Activated CD4-positive, alpha-beta memory T cell treated with anti-CD3 and anti-CD28 coated beads for 36 hours (primary cell): ENCODE measurements at regions of chr11 and their contacts with region 1.

Region 1: GRCh38 chr11:114180301-114181055 is 115.7 kb upstream of the NNMT start:
- DNase-seq: peak; percentile 33
- H3K4me3 Mint-ChIP-seq: no peak overlapping the region
- H3K27ac Mint-ChIP-seq: no peak overlapping the region
- H3K4me1 Mint-ChIP-seq: peaks cover 59% of the 10 kb centered on the region
- H3K27me3 Mint-ChIP-seq: no peaks in the 10 kb centered on the region

Region 2: DNA sequence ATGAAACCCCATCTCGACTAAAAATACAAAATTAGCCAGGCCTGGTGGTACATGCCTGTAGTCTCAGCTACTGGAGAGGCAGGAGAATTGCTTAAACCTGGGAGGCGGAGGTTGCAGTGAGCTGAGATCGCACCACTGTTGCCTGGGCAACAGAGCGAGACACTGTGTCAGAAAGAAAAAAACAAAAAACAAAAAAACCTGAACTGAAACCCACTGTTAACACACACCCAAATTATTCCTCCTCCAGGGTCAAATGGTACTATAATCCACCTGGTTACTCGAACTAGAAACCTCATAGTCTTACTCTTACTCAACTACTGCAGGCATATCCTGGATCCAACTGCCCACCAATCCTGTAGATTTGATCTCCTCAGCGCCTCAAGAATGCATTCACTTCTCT is 340.6 kb before region 1 on chr11:
- CTCF ChIA-PET with region 1: no interaction called
- POLR2A ChIA-PET with region 1: no interaction called
- intact Hi-C with region 1: no loop called
- DNase-seq: no peak
- H3K4me3 Mint-ChIP-seq: no peak overlapping the region
- H3K27ac Mint-ChIP-seq: no peak overlapping the region
- H3K4me1 Mint-ChIP-seq: peaks cover 7% of the 10 kb centered on the region
- H3K27me3 Mint-ChIP-seq: no peaks in the 10 kb centered on the region

Region 3: DNA sequence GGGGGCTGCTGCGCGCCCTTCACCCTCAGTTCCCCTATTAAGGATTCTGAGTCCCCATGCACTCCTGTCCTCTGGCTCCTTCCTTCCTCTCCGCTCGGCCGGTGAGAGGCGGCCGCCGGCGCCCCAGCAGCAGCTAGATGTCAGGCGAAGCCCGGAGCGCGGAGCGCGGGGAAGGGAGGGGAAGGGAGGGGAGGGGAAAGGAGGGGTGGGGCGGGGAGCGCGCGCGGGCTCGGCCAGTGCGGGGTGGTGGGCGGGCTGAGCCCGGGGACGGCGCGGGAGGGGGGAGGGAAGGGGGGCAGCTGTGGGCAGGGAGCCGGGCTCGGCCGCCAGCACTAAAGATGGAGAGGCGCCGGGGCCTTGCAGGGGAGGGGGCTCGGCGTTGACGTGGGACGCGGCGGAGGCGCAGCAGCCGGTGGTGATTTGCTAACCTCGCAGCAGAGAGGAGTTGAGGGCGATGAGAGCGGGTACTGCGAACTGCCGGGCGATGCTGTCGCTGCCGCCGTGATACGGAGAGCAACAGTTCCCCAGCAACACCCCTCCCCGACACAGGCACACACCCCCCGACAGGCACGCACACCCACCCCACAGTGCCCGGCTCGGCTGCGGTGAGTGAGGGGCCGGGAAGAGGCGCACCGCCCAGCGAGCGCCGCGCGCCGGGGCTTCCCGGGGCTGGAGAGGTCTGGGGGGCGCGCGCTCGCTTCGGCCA is 121.0 kb before region 1 on chr11 and contains the start of gene ZBTB16:
- CTCF ChIA-PET with region 1: interaction called, 5 read pairs
- POLR2A ChIA-PET with region 1: interaction called, 4 read pairs
- intact Hi-C with region 1: loop called (anchors 2 kb)
- DNase-seq: peak; percentile 75
- H3K4me3 Mint-ChIP-seq: peak within 1 kb of the TSS; percentile 80
- H3K27ac Mint-ChIP-seq: peak within 1 kb of the TSS; percentile 67
- H3K4me1 Mint-ChIP-seq: peaks cover 6% of the 10 kb centered on the region
- H3K27me3 Mint-ChIP-seq: peaks cover 16% of the 10 kb centered on the region
- total RNA-seq, gene ZBTB16: 7.7 to 9.7 TPM

Region 4: GRCh38 chr11:114075891-114076441 is 104.5 kb before region 1 on chr11:
- CTCF ChIA-PET with region 1: interaction called, 3 read pairs
- POLR2A ChIA-PET with region 1: no interaction called
- intact Hi-C with region 1: loop called (anchors 5 kb)
- DNase-seq: peak; percentile 60
- H3K4me3 Mint-ChIP-seq: peak overlapping the region; percentile 20
- H3K27ac Mint-ChIP-seq: peak overlapping the region; percentile 73
- H3K4me1 Mint-ChIP-seq: peaks cover 76% of the 10 kb centered on the region
- H3K27me3 Mint-ChIP-seq: no peaks in the 10 kb centered on the region

Region 5: GRCh38 chr11:114135737-114136151 is 44.7 kb before region 1 on chr11:
- CTCF ChIA-PET with region 1: no interaction called
- POLR2A ChIA-PET with region 1: no interaction called
- intact Hi-C with region 1: no loop called
- DNase-seq: no peak
- H3K4me3 Mint-ChIP-seq: no peak overlapping the region
- H3K27ac Mint-ChIP-seq: no peak overlapping the region
- H3K4me1 Mint-ChIP-seq: peaks cover 31% of the 10 kb centered on the region
- H3K27me3 Mint-ChIP-seq: no peaks in the 10 kb centered on the region

Region 6: GRCh38 chr11:114219559-114220349 is 39.3 kb after region 1 on chr11:
- CTCF ChIA-PET with region 1: no interaction called
- POLR2A ChIA-PET with region 1: no interaction called
- intact Hi-C with region 1: no loop called
- DNase-seq: no peak
- H3K4me3 Mint-ChIP-seq: no peak overlapping the region
- H3K27ac Mint-ChIP-seq: no peak overlapping the region
- H3K4me1 Mint-ChIP-seq: peaks cover 20% of the 10 kb centered on the region
- H3K27me3 Mint-ChIP-seq: no peaks in the 10 kb centered on the region